ENCODE measurements at regions of chr4 and their contacts with region 1.

Region 1: DNA sequence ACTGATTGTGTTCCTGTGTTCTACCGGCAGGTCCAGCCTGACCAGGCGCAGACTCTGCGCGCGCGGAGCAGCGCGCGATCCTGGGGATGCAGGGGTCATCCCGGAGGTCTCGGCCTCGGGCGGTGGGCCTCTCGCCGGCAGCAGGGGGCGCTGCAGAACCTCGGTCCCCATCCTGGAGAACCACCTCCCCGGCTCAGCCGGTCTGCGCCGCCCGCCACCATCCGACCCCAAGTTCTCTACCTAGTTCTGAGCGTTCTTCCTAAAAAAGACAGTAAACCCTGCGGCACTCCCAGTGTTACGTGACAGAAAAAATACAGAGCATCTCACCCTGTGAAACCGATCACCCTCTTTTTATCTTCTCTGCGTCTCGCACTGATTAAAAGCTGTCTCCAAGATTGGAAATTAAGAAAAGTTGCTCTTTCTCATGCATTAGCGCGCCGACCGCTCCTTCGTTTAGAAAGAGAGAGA is 1.6 kb downstream of the TRPC3 start:
- DNase-seq: peak; percentile 74 to 82 (median 77)
- H3K4me3 ChIP-seq: peak overlapping the region; percentile 68 to 71
- H3K4me3 Mint-ChIP-seq: peak overlapping the region; percentile 83 to 96 (median 88)
- H3K27ac ChIP-seq: no peak overlapping the region
- H3K27ac Mint-ChIP-seq: peak overlapping the region in 6 of 7 donors; percentile 17 to 77 (median 53)
- H3K4me1 ChIP-seq: peaks cover 21% of the 10 kb centered on the region
- H3K4me1 Mint-ChIP-seq: peaks cover 7 to 23% (median 19%) of the 10 kb centered on the region in 4 donors
- H3K27me3 ChIP-seq: no peaks in the 10 kb centered on the region
- H3K27me3 Mint-ChIP-seq: peaks cover 0 to 12% of the 10 kb centered on the region in 2 donors

Region 2: DNA sequence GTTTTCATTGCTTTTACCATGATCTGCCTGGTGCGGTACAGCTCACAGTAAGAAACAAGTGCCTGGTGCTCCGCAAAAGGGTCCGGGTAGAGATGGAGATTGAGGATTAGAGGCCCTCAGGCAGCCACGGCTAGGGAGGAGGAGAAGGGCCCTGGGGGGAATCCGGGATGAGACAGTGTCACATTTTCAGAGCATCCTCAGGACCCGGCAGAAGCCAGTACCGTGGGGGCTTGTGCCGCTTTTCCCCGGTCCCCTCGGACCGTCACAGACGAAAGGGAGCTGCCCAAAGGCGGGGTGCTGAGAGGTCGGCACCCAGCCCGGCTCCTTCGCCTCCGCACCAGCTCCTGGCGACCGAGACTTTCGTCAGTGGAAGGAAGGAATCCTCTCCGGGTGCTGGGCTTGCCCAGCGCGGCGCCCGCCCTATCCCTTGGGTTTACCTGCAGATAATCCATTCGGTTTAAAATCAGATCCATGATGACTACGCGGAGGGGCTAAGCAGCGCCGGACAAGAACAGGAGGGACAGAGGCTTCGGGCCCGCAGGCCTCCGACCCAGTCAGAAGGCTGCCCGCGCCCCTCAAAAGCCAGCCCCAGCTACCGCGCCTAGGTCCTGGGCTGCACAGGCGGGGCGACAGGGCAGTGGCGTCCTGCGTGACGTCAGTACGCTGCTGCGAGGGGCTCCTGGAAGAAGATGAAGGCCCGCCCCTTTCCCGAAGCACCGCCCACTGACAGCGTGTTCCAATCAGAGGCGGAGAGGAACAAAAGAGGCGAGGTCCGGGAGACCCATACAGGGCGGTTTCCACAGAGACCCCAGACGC is 80.2 kb before region 1 on chr4 and contains the start of gene BBS7:
- CTCF ChIA-PET with region 1: no interaction called
- POLR2A ChIA-PET with region 1: no interaction called
- intact Hi-C with region 1: loop called (anchors 2 kb)
- DNase-seq: peak; percentile 88 to 95 (median 89)
- H3K4me3 ChIP-seq: peak within 1 kb of the TSS; percentile 92 to 97
- H3K4me3 Mint-ChIP-seq: peak within 1 kb of the TSS; percentile 91 to 98 (median 96)
- H3K27ac ChIP-seq: peak within 1 kb of the TSS; percentile 81
- H3K27ac Mint-ChIP-seq: peak within 1 kb of the TSS; percentile 79 to 98 (median 94)
- H3K4me1 ChIP-seq: peaks cover 19% of the 10 kb centered on the region
- H3K4me1 Mint-ChIP-seq: peaks cover 9 to 30% (median 16%) of the 10 kb centered on the region in 4 donors
- H3K27me3 ChIP-seq: peaks cover 6% of the 10 kb centered on the region
- H3K27me3 Mint-ChIP-seq: peaks cover 4 to 6% of the 10 kb centered on the region in 2 donors
- total RNA-seq, gene BBS7: 8.8 to 10.1 TPM

Region 3: GRCh38 chr4:121938282-121939092 is 11.8 kb before region 1 on chr4:
- CTCF ChIA-PET with region 1: interaction called, 16 read pairs
- POLR2A ChIA-PET with region 1: no interaction called
- intact Hi-C with region 1: no loop called
- DNase-seq: no peak
- H3K4me3 ChIP-seq: no peak overlapping the region
- H3K4me3 Mint-ChIP-seq: peak overlapping the region in 1 of 8 donors; percentile 1
- H3K27ac ChIP-seq: no peak overlapping the region
- H3K27ac Mint-ChIP-seq: peak overlapping the region in 2 of 7 donors; percentile 11 to 30
- H3K4me1 ChIP-seq: peaks cover 12% of the 10 kb centered on the region
- H3K4me1 Mint-ChIP-seq: peaks cover 6 to 10% (median 9%) of the 10 kb centered on the region in 4 donors
- H3K27me3 ChIP-seq: no peaks in the 10 kb centered on the region
- H3K27me3 Mint-ChIP-seq: peaks cover 21 to 34% of the 10 kb centered on the region in 2 donors

Region 4: DNA sequence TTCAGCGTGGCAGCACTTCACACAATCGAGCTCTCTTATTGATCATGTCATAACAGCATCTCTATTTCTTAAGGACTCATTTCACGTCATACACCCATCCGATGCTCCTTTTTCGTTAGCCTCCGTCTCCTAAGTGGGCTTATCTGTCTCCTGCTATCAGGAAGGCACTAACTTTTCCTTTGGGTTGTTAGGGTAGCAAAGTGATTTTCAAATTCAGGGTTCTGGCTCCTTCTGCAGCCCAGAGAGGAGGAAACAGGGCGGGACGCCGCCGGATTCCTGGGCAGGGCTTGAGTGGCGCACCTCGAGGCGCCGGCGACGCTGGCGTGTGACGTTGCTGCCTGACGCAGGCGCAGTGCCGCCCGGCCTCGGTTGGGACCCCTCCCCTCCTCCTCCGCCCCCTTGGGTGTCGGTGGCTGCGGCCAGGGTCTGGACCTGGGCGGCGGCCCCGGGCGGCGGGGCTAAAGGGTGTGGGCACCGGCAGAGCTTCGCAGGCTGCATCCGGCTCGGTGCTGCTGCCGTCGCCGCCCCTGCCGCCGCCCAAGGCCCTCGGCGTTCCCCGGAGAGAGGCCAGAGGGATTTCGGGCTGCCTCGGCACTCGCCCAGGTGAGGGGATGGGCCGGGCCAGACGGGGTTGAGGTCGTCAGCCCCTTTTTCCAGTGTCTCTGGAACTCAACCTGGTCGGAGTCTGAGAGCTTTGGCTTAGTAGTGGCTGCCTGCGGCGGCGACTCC is 201.9 kb after region 1 on chr4 and contains the start of gene BLTP1:
- CTCF ChIA-PET with region 1: interaction called, 8 read pairs
- POLR2A ChIA-PET with region 1: interaction called, 3 read pairs
- intact Hi-C with region 1: loop called (anchors 2 kb)
- DNase-seq: peak; percentile 85 to 89 (median 88)
- H3K4me3 ChIP-seq: peak within 1 kb of the TSS; percentile 73 to 92
- H3K4me3 Mint-ChIP-seq: peak within 1 kb of the TSS; percentile 92 to 100 (median 96)
- H3K27ac ChIP-seq: peak within 1 kb of the TSS; percentile 85
- H3K27ac Mint-ChIP-seq: peak within 1 kb of the TSS; percentile 92 to 100 (median 99)
- H3K4me1 ChIP-seq: peaks cover 63% of the 10 kb centered on the region
- H3K4me1 Mint-ChIP-seq: peaks cover 51 to 84% (median 64%) of the 10 kb centered on the region in 4 donors
- H3K27me3 ChIP-seq: no peaks in the 10 kb centered on the region
- H3K27me3 Mint-ChIP-seq: no peaks in the 10 kb centered on the region
- total RNA-seq, gene BLTP1: 83.9 to 87.5 TPM

Region 5: GRCh38 chr4:122234686-122235085 is 284.4 kb after region 1 on chr4:
- CTCF ChIA-PET with region 1: no interaction called
- POLR2A ChIA-PET with region 1: no interaction called
- intact Hi-C with region 1: no loop called
- DNase-seq: no peak
- H3K4me3 ChIP-seq: no peak overlapping the region
- H3K4me3 Mint-ChIP-seq: no peak overlapping the region
- H3K27ac ChIP-seq: no peak overlapping the region
- H3K27ac Mint-ChIP-seq: peak overlapping the region in 3 of 7 donors; percentile 8 to 47 (median 38)
- H3K4me1 ChIP-seq: no peaks in the 10 kb centered on the region
- H3K4me1 Mint-ChIP-seq: peaks cover 0 to 9% (median 5%) of the 10 kb centered on the region in 4 donors
- H3K27me3 ChIP-seq: no peaks in the 10 kb centered on the region
- H3K27me3 Mint-ChIP-seq: no peaks in the 10 kb centered on the region

Region 6: DNA sequence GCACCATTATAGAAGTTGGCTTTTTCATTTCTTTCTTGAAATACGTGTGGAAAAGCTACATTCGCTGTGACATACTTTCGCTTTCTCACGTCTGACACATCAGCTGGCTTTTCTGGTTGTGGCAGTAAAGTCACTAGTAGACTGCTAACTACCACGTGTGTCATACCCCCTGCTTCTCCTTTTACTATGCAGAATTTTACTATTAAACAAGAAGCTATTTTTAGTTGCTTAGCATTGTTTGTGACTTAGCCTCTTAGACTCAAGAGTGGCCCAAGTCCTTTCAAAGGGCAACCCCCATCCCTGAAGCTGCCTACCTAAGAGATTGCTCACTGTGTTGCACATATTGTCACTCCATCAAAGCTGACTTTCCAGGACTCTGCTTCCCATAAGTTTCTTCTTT is 508.4 kb after region 1 on chr4:
- CTCF ChIA-PET with region 1: no interaction called
- POLR2A ChIA-PET with region 1: interaction called, 3 read pairs
- intact Hi-C with region 1: loop called (anchors 5 kb)
- DNase-seq: peak; percentile 45 to 70 (median 53)
- H3K4me3 ChIP-seq: peak overlapping the region; percentile 26 to 75
- H3K4me3 Mint-ChIP-seq: peak overlapping the region; percentile 84 to 90 (median 88)
- H3K27ac ChIP-seq: peak overlapping the region; percentile 42
- H3K27ac Mint-ChIP-seq: peak overlapping the region; percentile 81 to 95 (median 93)
- H3K4me1 ChIP-seq: peaks cover 55% of the 10 kb centered on the region
- H3K4me1 Mint-ChIP-seq: peaks cover 40 to 52% (median 46%) of the 10 kb centered on the region in 4 donors
- H3K27me3 ChIP-seq: no peaks in the 10 kb centered on the region
- H3K27me3 Mint-ChIP-seq: no peaks in the 10 kb centered on the region

Region 7: GRCh38 chr4:122716825-122717448 is 766.7 kb after region 1 on chr4:
- CTCF ChIA-PET with region 1: interaction called, 5 read pairs
- POLR2A ChIA-PET with region 1: no interaction called
- intact Hi-C with region 1: loop called (anchors 1 kb)
- DNase-seq: peak; percentile 61 to 67 (median 65)
- H3K4me3 ChIP-seq: no peak overlapping the region
- H3K4me3 Mint-ChIP-seq: no peak overlapping the region
- H3K27ac ChIP-seq: no peak overlapping the region
- H3K27ac Mint-ChIP-seq: peak overlapping the region in 3 of 7 donors; percentile 1 to 63 (median 28)
- H3K4me1 ChIP-seq: peaks cover 5% of the 10 kb centered on the region
- H3K4me1 Mint-ChIP-seq: peaks cover 0 to 5% (median 2%) of the 10 kb centered on the region in 4 donors
- H3K27me3 ChIP-seq: no peaks in the 10 kb centered on the region
- H3K27me3 Mint-ChIP-seq: no peaks in the 10 kb centered on the region

Measured in CD4-positive, alpha-beta memory T cell (primary cell).